ENCODE measurements at regions of chr11 and their contacts with region 1.

Region 1: GRCh38 chr11:66222358-66223149 is 45.9 kb upstream of the RAB1B start:
- H3K4me3 Mint-ChIP-seq: no peak overlapping the region
- H3K27ac Mint-ChIP-seq: no peak overlapping the region
- H3K4me1 Mint-ChIP-seq: no peaks in the 10 kb centered on the region
- H3K27me3 Mint-ChIP-seq: no peaks in the 10 kb centered on the region

Region 2: GRCh38 chr11:66044757-66045156 is 177.8 kb before region 1 on chr11:
- intact Hi-C with region 1: no loop called
- H3K4me3 Mint-ChIP-seq: no peak overlapping the region
- H3K27ac Mint-ChIP-seq: no peak overlapping the region
- H3K4me1 Mint-ChIP-seq: peaks cover 17% of the 10 kb centered on the region
- H3K27me3 Mint-ChIP-seq: peaks cover 41% of the 10 kb centered on the region

Region 3: DNA sequence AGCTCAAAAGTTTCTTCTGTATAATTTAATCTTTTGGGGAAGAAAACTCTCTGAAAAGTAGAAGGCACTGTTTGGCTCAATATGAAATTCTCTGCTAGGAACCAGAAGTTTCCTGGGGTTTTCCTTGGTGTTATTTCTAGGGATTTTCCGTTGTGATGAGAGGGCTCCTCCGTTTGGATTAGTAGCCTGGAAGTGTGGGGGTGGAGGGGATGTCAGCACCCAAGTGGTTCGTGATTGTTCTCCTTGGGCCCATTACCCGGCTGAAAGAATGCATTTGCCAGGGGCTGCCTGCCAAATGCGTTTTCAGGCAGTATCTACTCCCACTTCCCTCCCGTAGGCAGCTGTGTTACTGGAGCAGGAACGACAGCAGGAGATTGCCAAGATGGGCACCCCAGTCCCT is 166.1 kb before region 1 on chr11:
- intact Hi-C with region 1: no loop called
- H3K4me3 Mint-ChIP-seq: no peak overlapping the region
- H3K27ac Mint-ChIP-seq: no peak overlapping the region
- H3K4me1 Mint-ChIP-seq: peaks cover 11% of the 10 kb centered on the region
- H3K27me3 Mint-ChIP-seq: no peaks in the 10 kb centered on the region

Region 4: DNA sequence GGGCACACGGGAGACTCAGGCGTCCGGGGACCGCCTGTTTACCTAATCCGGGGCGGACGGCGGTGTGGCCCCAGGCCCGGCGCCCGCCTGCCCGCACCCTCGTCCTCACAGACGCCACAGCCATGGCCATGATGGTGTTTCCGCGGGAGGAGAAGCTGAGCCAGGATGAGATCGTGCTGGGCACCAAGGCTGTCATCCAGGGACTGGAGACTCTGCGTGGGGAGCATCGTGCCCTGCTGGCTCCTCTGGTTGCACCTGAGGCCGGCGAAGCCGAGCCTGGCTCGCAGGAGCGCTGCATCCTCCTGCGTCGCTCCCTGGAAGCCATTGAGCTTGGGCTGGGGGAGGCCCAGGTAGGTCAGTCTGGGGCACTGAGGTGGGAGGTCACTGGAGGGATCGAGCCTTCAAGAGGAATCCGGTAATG is 35.9 kb after region 1 on chr11:
- intact Hi-C with region 1: loop called (anchors 1 kb)
- H3K4me3 Mint-ChIP-seq: peak overlapping the region; percentile 69
- H3K27ac Mint-ChIP-seq: no peak overlapping the region
- H3K4me1 Mint-ChIP-seq: peaks cover 15% of the 10 kb centered on the region
- H3K27me3 Mint-ChIP-seq: peaks cover 61% of the 10 kb centered on the region

Region 5: GRCh38 chr11:66282468-66283386 is 60.2 kb after region 1 on chr11:
- intact Hi-C with region 1: loop called (anchors 1 kb)
- H3K4me3 Mint-ChIP-seq: no peak overlapping the region
- H3K27ac Mint-ChIP-seq: no peak overlapping the region
- H3K4me1 Mint-ChIP-seq: peaks cover 45% of the 10 kb centered on the region
- H3K27me3 Mint-ChIP-seq: peaks cover 34% of the 10 kb centered on the region

Measured in dendritic cell treated with granulocyte-macrophage colony-stimulating factor and Interleukin-4, amounts not matched to agents 40 ng/mL and 50 ng/mL, for 4 days (primary cell).